ENCODE measurements at regions of chr6 and their contacts with region 1.

Region 1: DNA sequence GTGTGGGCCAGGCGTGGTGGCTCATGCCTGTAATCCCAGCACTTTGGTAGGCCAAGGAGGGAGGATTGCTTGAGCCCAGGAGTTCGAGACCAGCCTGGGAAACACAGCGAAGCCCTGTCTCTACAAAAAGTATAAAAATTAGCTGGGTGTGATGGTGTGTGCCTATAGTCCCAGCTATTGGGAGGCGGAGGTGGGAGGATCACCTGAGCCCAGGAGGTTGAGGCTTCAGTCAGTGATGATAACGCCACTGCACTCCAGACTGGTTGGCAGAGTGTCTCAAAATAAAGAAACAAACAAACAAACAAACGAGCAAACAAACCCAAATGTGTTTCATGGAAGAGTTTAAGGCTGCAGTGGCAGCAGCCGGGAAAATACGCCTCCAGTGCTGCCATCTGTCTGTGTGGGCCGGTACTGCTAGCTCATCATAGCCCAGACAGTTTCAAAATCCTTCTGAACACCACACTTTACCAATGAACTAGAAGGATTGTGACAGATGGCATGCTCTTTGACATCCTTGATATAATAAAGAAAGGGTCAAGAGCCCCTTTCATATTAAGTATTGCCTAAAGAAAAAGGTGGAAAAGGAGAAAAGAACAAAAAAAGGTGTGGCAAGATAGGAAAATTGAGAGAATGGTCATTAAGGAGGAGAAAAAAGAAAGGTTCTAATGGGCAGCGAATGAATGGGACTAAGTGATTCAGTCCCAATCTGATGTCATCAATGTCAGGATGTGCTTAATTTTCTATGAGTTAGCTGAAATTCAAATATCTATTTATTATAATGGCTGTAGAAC is 298.6 kb downstream of the SYNE1 start:
- DNase-seq: peak; percentile 46
- H3K4me3 Mint-ChIP-seq: no peak overlapping the region
- H3K27ac Mint-ChIP-seq: no peak overlapping the region
- H3K4me1 Mint-ChIP-seq: peaks cover 8% of the 10 kb centered on the region
- H3K27me3 Mint-ChIP-seq: no peaks in the 10 kb centered on the region
- CTCF ChIP-seq: peak; percentile 74

Region 2: DNA sequence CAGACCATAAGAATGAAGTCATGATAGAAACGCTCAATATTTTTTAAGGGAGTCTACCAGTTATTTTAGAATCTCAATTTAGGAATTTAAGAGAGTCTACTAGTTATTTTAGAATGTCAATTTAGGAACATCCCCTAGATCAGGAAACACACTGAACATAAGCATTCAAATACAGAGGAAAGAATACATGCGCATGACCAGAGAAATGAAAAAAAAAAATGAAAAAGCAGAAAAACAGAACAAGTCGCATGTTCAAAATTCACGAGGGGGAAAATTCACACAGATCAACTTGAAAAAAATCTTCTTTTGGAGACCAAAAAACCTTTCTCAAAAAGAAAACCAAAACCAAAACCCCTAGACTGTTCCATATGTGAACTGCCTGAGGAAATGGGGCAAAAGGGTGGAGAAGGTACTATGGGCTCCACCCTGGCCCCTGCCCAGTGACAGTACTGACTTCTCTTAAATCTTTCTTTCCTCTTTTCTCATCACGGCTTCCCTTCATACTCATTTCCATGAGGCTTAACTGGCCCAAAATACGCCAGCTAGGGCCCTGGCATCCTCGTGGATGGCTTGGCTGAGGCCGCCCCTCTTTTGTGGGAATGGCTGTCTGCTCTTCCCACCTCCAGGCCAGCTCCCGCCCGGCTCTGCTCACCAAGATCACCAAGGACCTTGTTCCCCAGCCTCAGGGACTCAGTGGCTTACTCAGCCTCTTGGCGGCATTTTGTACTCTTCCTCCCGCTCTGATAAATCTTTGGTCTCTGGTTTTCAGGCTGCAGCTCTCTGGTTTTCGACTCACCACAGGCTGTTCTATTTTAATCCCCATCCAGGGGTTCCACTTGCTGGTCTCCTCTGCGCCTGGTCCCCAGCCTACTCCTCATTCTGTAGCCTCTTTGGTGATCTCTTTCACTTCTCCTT is 958.3 kb before region 1 on chr6:
- CTCF ChIA-PET with region 1: no interaction called
- POLR2A ChIA-PET with region 1: no interaction called
- intact Hi-C with region 1: no loop called
- DNase-seq: no peak
- H3K4me3 Mint-ChIP-seq: no peak overlapping the region
- H3K27ac Mint-ChIP-seq: peak overlapping the region; percentile 21
- H3K4me1 Mint-ChIP-seq: peaks cover 25% of the 10 kb centered on the region
- H3K27me3 Mint-ChIP-seq: no peaks in the 10 kb centered on the region
- CTCF ChIP-seq: no peak

Region 3: GRCh38 chr6:152170705-152171667 is 167.5 kb before region 1 on chr6:
- CTCF ChIA-PET with region 1: no interaction called
- POLR2A ChIA-PET with region 1: no interaction called
- intact Hi-C with region 1: no loop called
- DNase-seq: no peak
- H3K4me3 Mint-ChIP-seq: no peak overlapping the region
- H3K27ac Mint-ChIP-seq: no peak overlapping the region
- H3K4me1 Mint-ChIP-seq: no peaks in the 10 kb centered on the region
- H3K27me3 Mint-ChIP-seq: no peaks in the 10 kb centered on the region
- CTCF ChIP-seq: no peak

Region 4: DNA sequence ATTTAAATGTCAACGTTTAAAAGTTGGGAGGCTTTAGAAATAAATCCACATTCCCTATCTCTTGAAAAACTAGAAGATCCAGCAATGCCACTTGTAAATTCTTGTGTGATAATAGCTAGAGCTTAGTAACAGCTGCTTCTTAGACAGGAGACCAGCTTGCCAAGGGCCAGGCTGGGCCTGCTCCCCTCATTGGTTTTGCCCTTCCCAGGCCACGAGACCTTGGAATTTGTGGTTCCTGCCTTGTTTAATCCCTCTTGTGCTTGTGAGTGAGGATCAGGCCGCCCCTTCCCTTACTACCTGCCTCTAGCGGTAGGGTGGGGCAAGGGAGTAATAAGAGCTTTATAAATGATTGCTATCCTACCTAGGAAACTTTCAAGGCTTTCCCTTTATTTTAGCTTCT is 64.9 kb before region 1 on chr6:
- CTCF ChIA-PET with region 1: interaction called, 15 read pairs
- POLR2A ChIA-PET with region 1: interaction called, 4 read pairs
- intact Hi-C with region 1: loop called (anchors 1 kb)
- DNase-seq: peak; percentile 29
- H3K4me3 Mint-ChIP-seq: no peak overlapping the region
- H3K27ac Mint-ChIP-seq: peak overlapping the region; percentile 75
- H3K4me1 Mint-ChIP-seq: peaks cover 26% of the 10 kb centered on the region
- H3K27me3 Mint-ChIP-seq: no peaks in the 10 kb centered on the region
- CTCF ChIP-seq: peak; percentile 13

Region 5: GRCh38 chr6:152301764-152302568 is 36.6 kb before region 1 on chr6:
- CTCF ChIA-PET with region 1: interaction called, 33 read pairs
- POLR2A ChIA-PET with region 1: interaction called, 8 read pairs
- intact Hi-C with region 1: loop called (anchors 1 kb)
- DNase-seq: peak; percentile 88
- H3K4me3 Mint-ChIP-seq: peak overlapping the region; percentile 90
- H3K27ac Mint-ChIP-seq: peak overlapping the region; percentile 79
- H3K4me1 Mint-ChIP-seq: peaks cover 5% of the 10 kb centered on the region
- H3K27me3 Mint-ChIP-seq: no peaks in the 10 kb centered on the region
- CTCF ChIP-seq: peak; percentile 73

Region 6: GRCh38 chr6:152351110-152351509 is 12.6 kb after region 1 on chr6:
- CTCF ChIA-PET with region 1: interaction called, 16 read pairs
- POLR2A ChIA-PET with region 1: no interaction called
- intact Hi-C with region 1: no loop called
- DNase-seq: no peak
- H3K4me3 Mint-ChIP-seq: no peak overlapping the region
- H3K27ac Mint-ChIP-seq: no peak overlapping the region
- H3K4me1 Mint-ChIP-seq: no peaks in the 10 kb centered on the region
- H3K27me3 Mint-ChIP-seq: no peaks in the 10 kb centered on the region
- CTCF ChIP-seq: no peak

Measured in MCF 10A (cell line).